Colonic mucosa (tissue), 4 donors: ENCODE measurements at regions of chr11 and their contacts with region 1.

Region 1: DNA sequence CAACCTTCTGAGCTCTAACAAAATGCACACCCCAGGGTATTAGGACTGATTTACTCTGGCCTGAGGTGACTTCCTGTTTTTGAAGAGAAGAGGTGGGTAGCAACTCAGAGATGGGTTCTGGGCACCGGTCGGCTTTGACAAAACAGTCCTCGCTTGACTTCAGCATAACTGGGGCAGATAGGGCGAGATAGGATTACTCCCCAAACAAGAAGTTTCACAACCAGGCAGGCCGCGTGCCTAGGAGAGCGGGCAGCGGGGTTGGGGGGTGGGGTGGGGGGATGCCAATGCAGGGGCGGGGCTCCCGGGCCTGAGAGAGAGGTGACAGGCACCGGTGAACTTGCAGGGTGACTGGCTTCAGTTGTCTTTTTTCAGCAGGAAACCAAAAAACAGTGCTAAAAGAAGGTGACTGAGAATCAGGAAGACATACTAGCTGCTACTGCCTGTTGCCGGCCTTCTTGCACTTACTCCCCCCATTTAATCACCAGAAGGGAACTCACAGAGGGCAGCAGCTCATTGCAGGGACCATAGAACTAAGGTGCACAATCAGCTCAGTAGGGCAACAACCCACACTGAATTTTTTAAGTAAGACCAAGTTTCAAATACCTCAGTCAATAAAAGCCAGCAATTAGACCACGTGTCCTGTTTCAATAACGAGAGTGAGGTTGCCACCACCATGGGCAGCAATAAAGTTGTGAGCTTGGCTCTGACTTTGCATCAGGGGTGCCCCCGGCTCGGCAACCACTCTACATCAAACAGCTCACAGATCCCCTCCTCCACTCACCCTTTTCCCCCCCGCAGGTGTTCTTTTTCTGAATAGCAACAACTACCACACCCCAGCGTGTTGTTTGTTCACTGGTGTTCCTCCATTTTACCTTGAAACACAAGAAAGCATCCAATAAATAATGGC is 37.2 kb upstream of the ETS1 start:
- DNase-seq: no peak
- H3K4me3 ChIP-seq: no peak overlapping the region
- H3K27ac ChIP-seq: peak overlapping the region; percentile 37
- H3K4me1 ChIP-seq: no peaks in the 10 kb centered on the region
- H3K27me3 ChIP-seq: no peaks in the 10 kb centered on the region
- CTCF ChIP-seq: no peak

Region 2: GRCh38 chr11:128482512-128483191 is 141.9 kb before region 1 on chr11:
- intact Hi-C with region 1: loop called (anchors 10 kb)
- DNase-seq: no peak
- H3K4me3 ChIP-seq: no peak overlapping the region
- H3K27ac ChIP-seq: peak overlapping the region; percentile 45
- H3K4me1 ChIP-seq: no peaks in the 10 kb centered on the region
- H3K27me3 ChIP-seq: no peaks in the 10 kb centered on the region
- CTCF ChIP-seq: no peak